Naive thymus-derived CD4-positive, alpha-beta T cell (primary cell): ENCODE measurements at regions of chr16 and their contacts with region 1.

Region 1: DNA sequence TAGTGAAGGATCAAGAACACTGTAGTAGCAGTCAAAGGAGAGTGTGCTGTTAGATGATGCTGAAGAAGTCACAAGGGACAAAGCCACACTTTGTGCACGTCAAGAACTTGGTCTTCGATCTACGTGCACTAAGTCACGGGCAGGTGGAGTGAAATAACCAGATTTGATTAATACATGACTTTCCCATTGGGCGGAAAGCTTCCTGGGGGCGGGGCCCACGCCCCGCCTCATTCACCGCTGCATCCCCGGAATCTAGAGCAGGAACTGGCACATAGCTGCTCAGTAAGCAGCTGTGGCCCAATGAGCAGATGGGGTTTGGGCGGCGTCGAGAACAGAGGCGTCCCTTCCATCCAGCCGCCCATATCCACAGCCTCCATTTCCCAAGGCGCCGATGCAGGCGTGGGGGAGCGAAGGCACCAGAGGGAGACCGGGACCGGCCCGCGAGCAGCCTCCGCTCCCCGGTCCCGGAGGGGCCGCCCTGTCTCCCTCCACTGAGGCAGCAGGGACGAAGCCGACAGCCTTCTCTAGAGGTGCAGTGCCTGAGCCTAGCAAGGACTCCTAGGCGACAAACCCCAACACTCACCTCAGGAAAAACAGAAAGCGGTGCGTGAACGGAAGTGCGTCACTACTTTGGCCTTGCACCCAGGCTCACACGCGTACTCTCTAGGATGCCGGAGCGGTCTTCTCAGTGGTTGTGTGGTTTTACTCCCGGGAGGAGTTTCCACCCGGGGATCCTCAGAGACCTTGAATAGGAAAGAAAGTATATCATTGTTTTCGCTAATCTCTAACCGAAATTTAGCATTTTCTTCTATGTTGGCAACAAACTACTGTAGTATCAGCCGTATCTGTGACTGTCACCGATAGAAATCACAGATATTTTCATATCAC is 4.9 kb downstream of the ZNF19 start:
- DNase-seq: peak; percentile 57 to 90 (median 86)
- ATAC-seq: peak; percentile 91
- H3K4me3 ChIP-seq: peak overlapping the region; percentile 89
- H3K4me3 Mint-ChIP-seq: peak overlapping the region; percentile 82 to 95 (median 91)
- H3K27ac ChIP-seq: peak overlapping the region; percentile 92
- H3K27ac Mint-ChIP-seq: peak overlapping the region; percentile 85 to 97 (median 96)
- H3K4me1 ChIP-seq: peaks cover 7 to 10% of the 10 kb centered on the region in 2 donors
- H3K4me1 Mint-ChIP-seq: peaks cover 13 to 23% (median 17%) of the 10 kb centered on the region in 7 donors
- H3K27me3 ChIP-seq: no peaks in the 10 kb centered on the region
- H3K27me3 Mint-ChIP-seq: peaks cover 0 to 4% (median 0%) of the 10 kb centered on the region in 5 donors

Region 2: DNA sequence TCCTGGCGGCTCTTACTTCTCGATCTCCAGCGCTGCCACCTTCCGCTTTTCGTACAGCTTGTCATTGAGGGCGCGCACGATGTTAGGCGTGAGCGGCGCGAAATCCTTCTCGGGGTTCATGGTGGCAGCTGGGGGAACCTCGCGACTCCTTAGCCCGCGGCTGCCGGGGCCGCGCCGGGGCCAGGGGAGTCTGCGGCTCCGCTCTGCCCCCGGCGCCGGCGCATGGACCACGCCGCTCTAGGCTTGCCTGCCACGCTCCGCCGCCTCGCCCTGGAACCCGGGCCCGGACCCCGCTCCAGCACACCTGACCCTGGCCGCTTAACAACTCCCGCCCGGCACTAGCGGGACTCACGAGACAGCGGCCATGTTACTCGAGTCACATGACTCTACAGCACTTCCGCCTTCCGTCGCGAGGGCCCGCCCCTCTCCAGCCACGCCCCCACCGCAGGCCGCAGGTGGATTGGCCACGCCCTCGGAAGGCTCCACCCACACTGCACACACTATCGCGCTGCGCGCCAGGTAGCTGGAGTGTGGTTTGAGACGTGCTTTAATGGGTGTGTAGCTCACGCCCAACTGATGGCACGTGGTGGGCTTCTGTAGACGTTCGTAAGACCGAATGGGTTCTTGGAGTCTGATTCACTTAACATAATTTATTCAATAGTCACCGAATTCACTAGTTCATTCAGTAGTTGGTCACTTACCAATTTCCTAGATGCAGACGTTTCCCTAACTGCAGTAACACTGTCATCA is 683.3 kb before region 1 on chr16 and contains the start of gene VAC14:
- CTCF ChIA-PET with region 1: no interaction called
- POLR2A ChIA-PET with region 1: no interaction called
- intact Hi-C with region 1: loop called in 1 of 2 experiments (anchors 5 kb)
- DNase-seq: peak; percentile 96 to 99 (median 97)
- ATAC-seq: peak; percentile 99
- H3K4me3 ChIP-seq: peak within 1 kb of the TSS; percentile 90
- H3K4me3 Mint-ChIP-seq: peak within 1 kb of the TSS; percentile 90 to 98 (median 94)
- H3K27ac ChIP-seq: peak within 1 kb of the TSS; percentile 78
- H3K27ac Mint-ChIP-seq: peak within 1 kb of the TSS; percentile 84 to 95 (median 92)
- H3K4me1 ChIP-seq: peaks cover 11 to 17% of the 10 kb centered on the region in 2 donors
- H3K4me1 Mint-ChIP-seq: peaks cover 19 to 49% (median 44%) of the 10 kb centered on the region in 7 donors
- H3K27me3 ChIP-seq: no peaks in the 10 kb centered on the region
- H3K27me3 Mint-ChIP-seq: peaks cover 0 to 15% (median 0%) of the 10 kb centered on the region in 5 donors
- total RNA-seq, gene VAC14: 36.7 to 47.1 (median 45.9) TPM

Region 3: DNA sequence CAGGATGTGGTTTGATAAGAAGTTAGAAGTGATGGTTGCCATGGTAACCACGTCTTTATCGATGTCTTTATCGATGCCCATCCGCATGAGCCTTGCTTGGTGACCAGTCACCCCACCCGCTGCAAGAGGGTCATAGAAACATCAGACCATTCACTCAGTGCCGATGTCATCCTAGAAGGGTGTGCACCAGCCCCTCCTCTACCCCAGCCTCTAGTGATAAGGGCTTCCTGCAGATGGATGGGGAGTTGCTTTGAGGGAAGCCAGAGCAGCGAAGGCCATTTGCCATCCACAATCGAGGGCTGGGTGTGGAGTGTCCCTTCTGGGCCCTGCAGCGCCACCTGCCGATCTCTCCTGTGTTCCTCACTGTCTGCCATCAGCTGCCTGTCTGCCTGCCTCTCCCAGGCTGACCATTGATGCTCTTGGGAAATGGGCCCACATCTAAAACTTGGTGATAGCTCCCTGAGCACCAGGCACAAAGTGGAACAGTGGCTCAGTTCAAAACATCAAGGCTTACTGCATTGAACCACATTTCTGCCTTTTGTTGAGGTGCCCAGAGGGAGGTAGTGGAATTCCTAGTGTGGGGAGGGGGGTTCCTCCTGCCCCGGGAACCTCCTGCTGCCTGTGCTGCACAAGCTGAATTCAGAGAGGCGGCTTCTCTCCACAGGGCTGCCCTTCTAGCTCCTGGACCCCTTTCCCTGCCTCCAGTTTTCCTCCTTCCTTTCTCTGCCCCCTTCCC is 116.8 kb before region 1 on chr16:
- CTCF ChIA-PET with region 1: no interaction called
- POLR2A ChIA-PET with region 1: no interaction called
- intact Hi-C with region 1: no loop called
- DNase-seq: peak in 1 of 9 donors; percentile 44
- ATAC-seq: peak; percentile 46
- H3K4me3 ChIP-seq: no peak overlapping the region
- H3K4me3 Mint-ChIP-seq: no peak overlapping the region
- H3K27ac ChIP-seq: no peak overlapping the region
- H3K27ac Mint-ChIP-seq: no peak overlapping the region
- H3K4me1 ChIP-seq: no peaks in the 10 kb centered on the region
- H3K4me1 Mint-ChIP-seq: peaks cover 0 to 23% (median 0%) of the 10 kb centered on the region in 7 donors
- H3K27me3 ChIP-seq: no peaks in the 10 kb centered on the region
- H3K27me3 Mint-ChIP-seq: peaks cover 0 to 36% (median 22%) of the 10 kb centered on the region in 5 donors

Region 4: GRCh38 chr16:71439523-71439922 is 44.7 kb before region 1 on chr16:
- CTCF ChIA-PET with region 1: no interaction called
- POLR2A ChIA-PET with region 1: no interaction called
- intact Hi-C with region 1: no loop called
- DNase-seq: no peak
- ATAC-seq: no peak
- H3K4me3 ChIP-seq: no peak overlapping the region
- H3K4me3 Mint-ChIP-seq: no peak overlapping the region
- H3K27ac ChIP-seq: no peak overlapping the region
- H3K27ac Mint-ChIP-seq: no peak overlapping the region
- H3K4me1 ChIP-seq: no peaks in the 10 kb centered on the region
- H3K4me1 Mint-ChIP-seq: peaks cover 0 to 10% (median 0%) of the 10 kb centered on the region in 7 donors
- H3K27me3 ChIP-seq: no peaks in the 10 kb centered on the region
- H3K27me3 Mint-ChIP-seq: peaks cover 0 to 54% (median 28%) of the 10 kb centered on the region in 5 donors

Region 5: DNA sequence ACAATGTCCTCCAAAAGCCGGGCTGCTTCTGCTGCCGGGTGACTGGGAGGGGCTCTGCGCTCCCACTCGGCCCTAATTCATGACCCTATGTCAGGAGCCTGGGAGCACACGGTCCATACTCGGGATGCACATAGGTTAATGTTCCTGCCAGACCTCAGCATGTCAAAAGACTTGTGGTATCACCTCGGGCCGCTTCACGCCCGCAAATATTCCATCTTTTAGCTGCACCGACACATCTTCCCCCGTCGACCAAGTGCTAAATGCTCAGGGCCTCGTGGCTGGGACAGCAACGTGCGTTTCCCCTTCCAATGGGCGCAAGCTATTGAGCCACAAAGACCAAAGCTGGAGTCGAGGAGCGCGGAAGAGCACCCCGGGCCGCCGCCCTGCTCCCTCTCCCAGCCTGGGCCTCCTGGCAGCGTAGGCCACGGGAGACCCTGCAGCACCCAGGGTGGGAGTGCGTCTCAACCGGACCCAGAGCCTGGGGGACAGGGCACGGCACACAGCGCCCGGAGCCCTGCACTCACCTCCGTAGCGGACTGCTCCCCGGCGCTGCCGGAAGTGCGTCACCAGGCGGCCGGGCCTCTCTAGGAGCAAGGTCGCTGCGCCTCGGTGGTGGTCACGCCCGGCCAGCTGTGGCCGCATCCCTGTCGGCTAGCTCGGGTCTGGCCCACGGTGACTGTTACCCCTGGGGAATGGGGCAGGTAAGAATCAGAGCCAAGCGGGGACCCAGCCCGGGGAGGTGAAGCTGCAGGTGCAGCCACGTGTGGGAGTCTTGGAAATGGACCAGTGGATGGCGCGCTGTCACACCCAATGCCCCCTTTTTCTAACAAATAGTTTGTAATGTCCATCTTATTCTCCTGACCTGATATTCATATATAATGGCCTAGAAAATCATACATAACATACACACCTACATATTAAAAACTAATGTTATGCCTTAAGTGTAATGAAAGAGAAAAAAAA is 22.3 kb before region 1 on chr16 and contains the start of gene ZNF23:
- CTCF ChIA-PET with region 1: interaction called, 7 read pairs
- POLR2A ChIA-PET with region 1: interaction called, 36 read pairs
- intact Hi-C with region 1: loop called (anchors 1 kb)
- DNase-seq: peak; percentile 53 to 84 (median 72)
- ATAC-seq: peak; percentile 99
- H3K4me3 ChIP-seq: peak within 1 kb of the TSS; percentile 92
- H3K4me3 Mint-ChIP-seq: peak within 1 kb of the TSS; percentile 88 to 97 (median 94)
- H3K27ac ChIP-seq: peak within 1 kb of the TSS; percentile 87
- H3K27ac Mint-ChIP-seq: peak within 1 kb of the TSS; percentile 85 to 98 (median 92)
- H3K4me1 ChIP-seq: peaks cover 4 to 6% of the 10 kb centered on the region in 2 donors
- H3K4me1 Mint-ChIP-seq: peaks cover 13 to 39% (median 27%) of the 10 kb centered on the region in 7 donors
- H3K27me3 ChIP-seq: no peaks in the 10 kb centered on the region
- H3K27me3 Mint-ChIP-seq: no peaks in the 10 kb centered on the region
- total RNA-seq, gene ZNF23: 6.5 to 16.0 (median 8.8) TPM

Region 6: DNA sequence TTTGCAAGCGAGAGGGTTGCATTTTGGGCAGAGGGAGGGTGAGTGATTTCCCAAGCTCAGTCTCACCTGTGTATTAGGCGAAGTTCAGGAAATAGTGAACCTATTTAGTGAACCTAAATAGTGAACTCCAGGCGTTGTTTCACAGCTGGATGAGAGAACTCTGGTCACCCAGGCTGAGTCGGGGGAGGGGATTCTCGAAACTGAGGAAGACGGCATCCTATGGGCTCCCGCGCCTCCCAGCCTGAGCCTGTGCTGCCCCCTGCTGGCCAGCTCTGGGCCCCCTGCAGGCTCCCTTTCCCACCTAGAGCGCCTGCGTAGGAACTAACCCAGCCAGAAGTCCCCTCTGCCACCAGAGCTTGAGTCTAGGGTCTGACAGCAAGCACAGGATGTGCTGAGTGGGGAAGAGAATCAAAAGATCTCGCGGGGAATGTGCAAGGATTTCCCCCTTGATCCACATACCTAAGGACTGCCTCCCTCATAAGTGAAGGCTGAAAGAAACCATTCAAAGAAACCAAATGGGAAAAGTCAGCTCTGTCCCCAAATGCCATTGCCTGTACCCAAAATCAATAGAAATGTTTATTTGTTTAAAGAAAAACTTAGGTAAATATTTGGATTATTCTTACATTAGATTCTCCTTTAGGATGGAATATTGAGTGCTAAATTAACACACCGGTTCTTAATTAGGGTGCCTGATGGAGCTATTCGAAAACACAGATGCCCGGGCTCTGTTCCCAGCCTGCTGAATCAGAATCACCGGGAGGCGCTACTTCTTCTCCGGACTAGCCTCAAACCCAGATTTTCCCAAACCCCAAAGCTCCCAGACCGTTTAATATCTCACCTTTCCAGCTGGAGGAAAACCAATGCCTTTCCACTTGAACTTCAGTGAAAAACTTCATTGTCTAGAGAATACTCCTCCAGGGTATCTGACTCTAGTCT is 127.0 kb after region 1 on chr16:
- CTCF ChIA-PET with region 1: no interaction called
- POLR2A ChIA-PET with region 1: interaction called, 3 read pairs
- intact Hi-C with region 1: loop called in 1 of 2 experiments (anchors 1 kb)
- DNase-seq: peak; percentile 43 to 82 (median 72)
- ATAC-seq: peak; percentile 96
- H3K4me3 ChIP-seq: no peak overlapping the region
- H3K4me3 Mint-ChIP-seq: peak overlapping the region in 4 of 10 donors; percentile 21 to 56 (median 38)
- H3K27ac ChIP-seq: no peak overlapping the region
- H3K27ac Mint-ChIP-seq: no peak overlapping the region
- H3K4me1 ChIP-seq: no peaks in the 10 kb centered on the region
- H3K4me1 Mint-ChIP-seq: peaks cover 0 to 5% (median 0%) of the 10 kb centered on the region in 7 donors
- H3K27me3 ChIP-seq: no peaks in the 10 kb centered on the region
- H3K27me3 Mint-ChIP-seq: peaks cover 11 to 36% (median 22%) of the 10 kb centered on the region in 5 donors

Region 7: GRCh38 chr16:72093448-72094265 is 609.4 kb after region 1 on chr16 and contains the starts of genes DHX38 and TXNL4B:
- CTCF ChIA-PET with region 1: no interaction called
- POLR2A ChIA-PET with region 1: no interaction called
- intact Hi-C with region 1: loop called in 1 of 2 experiments (anchors 1 kb)
- DNase-seq: peak; percentile 70 to 95 (median 92)
- ATAC-seq: peak; percentile 98
- H3K4me3 ChIP-seq: peak within 1 kb of the TSS; percentile 86
- H3K4me3 Mint-ChIP-seq: peak within 1 kb of the TSS; percentile 94 to 100 (median 98)
- H3K27ac ChIP-seq: peak within 1 kb of the TSS; percentile 93
- H3K27ac Mint-ChIP-seq: peak within 1 kb of the TSS; percentile 92 to 100 (median 99)
- H3K4me1 ChIP-seq: peaks cover 21 to 24% of the 10 kb centered on the region in 2 donors
- H3K4me1 Mint-ChIP-seq: peaks cover 33 to 70% (median 63%) of the 10 kb centered on the region in 7 donors
- H3K27me3 ChIP-seq: no peaks in the 10 kb centered on the region
- H3K27me3 Mint-ChIP-seq: no peaks in the 10 kb centered on the region
- total RNA-seq, gene DHX38: 90.1 to 113 (median 104) TPM
- total RNA-seq, gene TXNL4B: 12.5 to 20.9 (median 18.5) TPM